ENCODE measurements at regions of chr7 and their contacts with region 1.

Region 1: DNA sequence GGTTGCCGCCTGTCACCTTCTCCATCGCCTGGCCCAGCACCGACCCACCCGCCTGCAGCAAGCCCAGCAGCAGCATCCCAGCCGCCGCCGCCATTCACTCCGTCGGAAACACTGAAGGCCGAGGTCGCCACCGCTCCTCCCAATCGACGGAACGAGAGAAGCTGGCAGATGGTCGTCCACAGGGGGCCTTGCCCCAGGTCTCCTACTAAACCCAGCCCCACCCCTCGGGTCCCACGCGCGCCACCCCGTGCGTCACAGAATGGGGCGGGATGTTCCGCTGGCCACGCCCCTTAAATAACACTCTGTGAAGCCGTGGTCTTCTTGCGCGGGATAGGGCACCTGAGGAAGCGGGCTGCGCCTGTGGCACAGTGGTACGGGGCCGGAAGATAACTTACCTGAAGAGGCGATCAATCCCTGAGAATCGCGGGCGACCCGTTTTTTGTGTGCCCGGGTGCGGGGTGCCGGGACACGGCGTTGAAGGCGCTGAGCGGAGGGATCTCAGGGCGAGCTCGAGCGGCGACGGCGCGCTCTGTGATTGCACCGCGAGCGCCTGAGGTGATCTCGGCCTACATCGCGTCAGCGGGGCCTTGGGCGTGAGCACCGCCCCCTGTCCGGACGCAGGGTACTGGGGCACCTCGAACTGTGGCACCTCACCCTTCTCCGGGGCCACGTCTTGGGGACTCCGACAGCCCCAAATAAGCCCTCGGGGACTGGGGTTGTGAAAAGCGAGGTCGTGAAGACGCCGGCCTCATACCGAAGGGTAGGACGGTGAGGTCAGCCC is at the start of gene CYP51A1:
- DNase-seq: peak; percentile 97
- H3K4me3 ChIP-seq: peak within 1 kb of the TSS; percentile 78 to 91 (median 84)
- H3K27ac ChIP-seq: peak within 1 kb of the TSS; percentile 87 to 95 (median 92)
- H3K4me1 ChIP-seq: peaks cover 0 to 21% (median 10%) of the 10 kb centered on the region in 4 donors
- H3K27me3 ChIP-seq: no peaks in the 10 kb centered on the region
- CTCF ChIP-seq: no peak
- EP300 ChIP-seq: peak in 2 of 4 donors; percentile 49 to 63
- POLR2A ChIP-seq: peak; percentile 93
- total RNA-seq, gene CYP51A1: 17.7 to 27.8 (median 25.1) TPM

Region 2: GRCh38 chr7:92206019-92206418 is 71.6 kb after region 1 on chr7:
- intact Hi-C with region 1: loop called (anchors 5 kb)
- DNase-seq: no peak
- H3K4me3 ChIP-seq: no peak overlapping the region
- H3K27ac ChIP-seq: no peak overlapping the region
- H3K4me1 ChIP-seq: no peaks in the 10 kb centered on the region
- H3K27me3 ChIP-seq: no peaks in the 10 kb centered on the region
- CTCF ChIP-seq: no peak
- EP300 ChIP-seq: no peak
- POLR2A ChIP-seq: no peak

Region 3: DNA sequence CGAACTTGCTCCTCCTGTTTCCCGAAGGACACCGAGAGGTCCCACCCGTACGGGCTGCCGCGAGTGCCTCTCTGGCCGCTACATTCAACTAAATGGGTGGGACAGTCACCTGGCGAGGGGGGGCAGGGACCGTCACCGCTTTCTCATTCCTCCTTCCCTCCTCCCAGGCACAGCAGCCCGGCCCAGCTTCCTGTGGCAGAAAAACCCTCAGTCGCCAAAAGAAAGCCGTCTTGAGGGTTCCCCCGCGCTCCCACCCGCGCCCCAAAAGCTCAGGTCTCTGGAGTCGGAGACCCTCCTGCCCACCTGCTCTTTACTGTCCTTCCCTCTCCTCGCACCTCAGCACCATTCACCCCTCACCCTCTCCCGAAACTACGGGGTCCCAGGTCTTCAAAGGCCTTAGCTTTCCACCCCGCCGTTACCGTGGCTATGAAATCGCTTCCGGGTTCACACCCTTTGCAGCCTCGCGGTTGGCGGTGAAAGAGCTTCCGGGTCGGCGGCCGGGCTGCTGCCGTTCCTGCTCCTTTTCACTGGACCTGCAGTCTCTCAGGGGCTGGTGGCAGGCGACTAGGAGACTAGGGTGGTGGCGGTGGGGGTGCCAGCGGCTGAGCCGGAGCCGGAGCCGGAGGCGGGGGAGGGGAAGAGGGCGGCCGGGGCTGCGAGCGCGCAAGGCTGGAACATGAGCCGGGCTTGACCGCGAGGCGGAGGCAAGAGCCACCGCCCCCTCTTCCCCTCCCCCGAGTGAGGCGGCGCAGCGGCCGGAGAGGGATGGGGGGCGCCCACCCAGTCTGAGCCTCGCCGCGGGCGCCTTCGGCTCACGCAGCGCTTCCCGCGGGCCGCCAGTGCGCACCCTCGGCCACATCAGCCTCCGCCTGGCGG is 111.3 kb after region 1 on chr7 and contains the starts of genes ANKIB1 and KRIT1:
- intact Hi-C with region 1: loop called (anchors 10 kb)
- DNase-seq: peak; percentile 93
- H3K4me3 ChIP-seq: peak within 1 kb of the TSS; percentile 71 to 99 (median 95)
- H3K27ac ChIP-seq: peak within 1 kb of the TSS; percentile 81 to 95 (median 89)
- H3K4me1 ChIP-seq: peaks cover 0 to 43% (median 27%) of the 10 kb centered on the region in 4 donors
- H3K27me3 ChIP-seq: no peaks in the 10 kb centered on the region
- CTCF ChIP-seq: peak in 2 of 4 experiments; percentile 21 to 24
- EP300 ChIP-seq: no peak
- POLR2A ChIP-seq: peak; percentile 21 to 62
- total RNA-seq, gene ANKIB1: 24.6 to 37.5 (median 33.3) TPM
- total RNA-seq, gene KRIT1: 69.1 to 97.2 (median 75.8) TPM

Region 4: GRCh38 chr7:92528188-92528957 is 393.9 kb after region 1 on chr7 and contains the starts of genes PEX1 and RBM48:
- intact Hi-C with region 1: loop called (anchors 5 kb)
- DNase-seq: peak; percentile 98
- H3K4me3 ChIP-seq: peak within 1 kb of the TSS; percentile 83 to 97 (median 95)
- H3K27ac ChIP-seq: peak within 1 kb of the TSS; percentile 86 to 90 (median 88)
- H3K4me1 ChIP-seq: peaks cover 0 to 22% (median 20%) of the 10 kb centered on the region in 4 donors
- H3K27me3 ChIP-seq: no peaks in the 10 kb centered on the region
- CTCF ChIP-seq: peak in 1 of 4 experiments; percentile 19
- EP300 ChIP-seq: no peak
- POLR2A ChIP-seq: no peak
- total RNA-seq, gene PEX1: 19.0 to 29.0 (median 24.4) TPM
- total RNA-seq, gene RBM48: 6.7 to 20.4 (median 14.5) TPM